ENCODE measurements at regions of chr7 and their contacts with region 1.

Region 1: DNA sequence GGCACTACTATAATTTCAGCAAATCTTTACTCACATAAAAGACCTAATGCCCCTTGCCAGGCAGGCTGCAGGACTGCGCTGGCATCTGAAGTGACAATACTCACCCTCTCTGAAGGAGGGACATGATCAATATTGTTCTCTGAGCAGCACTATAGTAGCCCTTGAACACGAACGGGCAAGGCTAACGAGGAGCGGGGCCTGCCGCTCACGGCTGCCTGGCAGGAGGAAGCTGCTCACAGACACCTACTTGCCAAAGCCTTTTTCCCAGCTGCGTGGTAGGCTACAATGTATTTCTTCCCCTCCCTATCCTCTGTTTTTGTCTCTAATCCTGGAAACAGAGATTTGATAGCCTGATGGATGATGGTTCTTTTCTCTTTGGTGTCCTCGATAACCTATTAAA is 19.9 kb downstream of the PUS7 start:
- DNase-seq: no peak
- ATAC-seq: no peak
- H3K4me3 ChIP-seq: no peak overlapping the region
- H3K27ac ChIP-seq: no peak overlapping the region
- H3K4me1 ChIP-seq: no peaks in the 10 kb centered on the region
- H3K27me3 ChIP-seq: no peaks in the 10 kb centered on the region
- CTCF ChIP-seq: no peak

Region 2: DNA sequence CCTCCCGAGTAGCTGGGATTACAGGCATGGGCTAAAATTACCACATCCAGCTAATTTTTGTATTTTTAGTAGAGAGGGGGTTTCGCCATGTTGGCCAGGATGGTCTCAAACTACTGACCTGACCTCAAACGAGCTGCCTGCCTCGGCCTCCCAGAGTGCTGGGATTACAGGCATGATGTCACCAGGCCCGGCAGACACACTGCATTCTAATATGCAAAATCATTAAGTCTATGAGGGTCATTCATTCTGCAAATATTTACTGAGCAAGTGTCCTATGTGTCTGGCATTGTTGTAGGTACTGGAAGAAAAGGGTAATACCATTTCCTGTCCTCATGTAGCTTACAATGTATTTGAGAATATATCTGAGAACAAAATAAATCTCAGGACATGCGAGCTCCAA is 17.2 kb after region 1 on chr7:
- CTCF ChIA-PET with region 1: no interaction called
- POLR2A ChIA-PET with region 1: interaction called, 10 read pairs
- in situ Hi-C with region 1: no loop called
- intact Hi-C with region 1: no loop called
- DNase-seq: no peak
- ATAC-seq: no peak
- H3K4me3 ChIP-seq: no peak overlapping the region
- H3K27ac ChIP-seq: no peak overlapping the region
- H3K4me1 ChIP-seq: no peaks in the 10 kb centered on the region
- H3K27me3 ChIP-seq: no peaks in the 10 kb centered on the region
- CTCF ChIP-seq: no peak